ENCODE measurements at regions of chr2 and their contacts with region 1.

Region 1: DNA sequence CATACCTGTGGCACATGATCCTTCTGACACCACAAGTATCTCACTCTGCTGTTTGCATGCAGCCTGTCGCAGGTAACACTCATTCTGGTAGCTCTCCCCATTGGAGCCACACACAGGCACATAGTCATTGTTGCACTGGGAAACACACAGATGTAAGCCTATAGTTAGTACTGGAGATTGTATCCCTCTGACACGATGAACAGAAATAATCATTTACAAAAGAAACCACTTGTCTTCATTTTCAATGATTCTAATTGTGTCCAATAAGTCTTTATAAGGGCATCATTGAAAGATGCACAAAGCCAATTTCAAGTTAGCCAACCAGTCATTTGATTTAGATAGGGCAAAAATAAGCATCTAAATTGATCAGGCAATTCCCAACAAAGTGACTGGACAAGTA is 10.4 kb downstream of the TMEFF2 start:
- DNase-seq: no peak
- ATAC-seq: no peak
- H3K4me3 ChIP-seq: no peak overlapping the region
- H3K27ac ChIP-seq: no peak overlapping the region
- H3K4me1 ChIP-seq: no peaks in the 10 kb centered on the region
- H3K27me3 ChIP-seq: no peaks in the 10 kb centered on the region
- CTCF ChIP-seq: no peak

Region 2: GRCh38 chr2:192208848-192209247 is 24.5 kb after region 1 on chr2:
- intact Hi-C with region 1: loop called in 1 of 2 experiments (anchors 2 kb)
- DNase-seq: no peak
- ATAC-seq: no peak
- H3K4me3 ChIP-seq: no peak overlapping the region
- H3K27ac ChIP-seq: no peak overlapping the region
- H3K4me1 ChIP-seq: no peaks in the 10 kb centered on the region
- H3K27me3 ChIP-seq: no peaks in the 10 kb centered on the region
- CTCF ChIP-seq: no peak

Region 3: DNA sequence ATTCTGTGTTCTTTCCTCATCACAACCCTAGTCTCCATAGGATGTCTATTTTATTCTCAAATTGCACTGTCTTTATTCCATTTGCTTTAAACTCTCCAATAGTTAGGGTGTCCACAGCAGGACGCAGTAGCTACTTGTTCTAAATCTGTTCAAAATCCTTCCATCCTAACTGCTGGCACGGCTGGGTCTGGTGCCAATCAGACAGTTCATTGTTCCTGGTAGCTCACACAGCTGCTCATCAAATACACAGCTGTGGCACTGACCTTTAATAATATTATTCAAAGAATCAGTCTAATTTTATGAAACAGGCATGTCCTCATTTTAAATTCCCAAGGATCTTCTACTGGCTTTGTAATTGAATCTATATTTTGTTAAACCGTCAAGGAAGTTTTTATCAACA is 70.1 kb after region 1 on chr2:
- intact Hi-C with region 1: no loop called
- DNase-seq: no peak
- ATAC-seq: no peak
- H3K4me3 ChIP-seq: no peak overlapping the region
- H3K27ac ChIP-seq: no peak overlapping the region
- H3K4me1 ChIP-seq: no peaks in the 10 kb centered on the region
- H3K27me3 ChIP-seq: no peaks in the 10 kb centered on the region
- CTCF ChIP-seq: no peak

Region 4: DNA sequence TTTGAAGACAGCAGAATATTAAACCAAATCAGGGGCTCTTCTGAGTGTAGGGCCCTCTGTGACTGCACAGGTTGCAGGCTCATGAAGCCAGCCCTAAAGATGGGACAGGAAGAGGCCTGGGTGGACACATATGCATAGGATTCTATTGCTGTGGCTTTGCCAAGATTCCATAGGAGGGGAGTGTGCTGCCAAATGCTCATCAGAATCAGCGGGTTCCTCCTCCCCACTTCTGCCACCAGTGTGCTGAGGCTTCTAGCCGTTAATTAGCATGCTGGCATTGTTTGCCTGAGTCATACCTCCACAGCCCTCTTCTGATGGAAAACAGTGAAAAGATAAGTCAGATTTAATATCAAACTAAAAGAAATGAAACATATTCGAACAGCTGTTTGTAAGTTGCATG is 114.3 kb after region 1 on chr2:
- intact Hi-C with region 1: no loop called
- DNase-seq: no peak
- ATAC-seq: no peak
- H3K4me3 ChIP-seq: no peak overlapping the region
- H3K27ac ChIP-seq: no peak overlapping the region
- H3K4me1 ChIP-seq: no peaks in the 10 kb centered on the region
- H3K27me3 ChIP-seq: no peaks in the 10 kb centered on the region
- CTCF ChIP-seq: no peak

Measured in psoas muscle (tissue), 8 donors.